ENCODE measurements at regions of chr4 and their contacts with region 1.

Region 1: DNA sequence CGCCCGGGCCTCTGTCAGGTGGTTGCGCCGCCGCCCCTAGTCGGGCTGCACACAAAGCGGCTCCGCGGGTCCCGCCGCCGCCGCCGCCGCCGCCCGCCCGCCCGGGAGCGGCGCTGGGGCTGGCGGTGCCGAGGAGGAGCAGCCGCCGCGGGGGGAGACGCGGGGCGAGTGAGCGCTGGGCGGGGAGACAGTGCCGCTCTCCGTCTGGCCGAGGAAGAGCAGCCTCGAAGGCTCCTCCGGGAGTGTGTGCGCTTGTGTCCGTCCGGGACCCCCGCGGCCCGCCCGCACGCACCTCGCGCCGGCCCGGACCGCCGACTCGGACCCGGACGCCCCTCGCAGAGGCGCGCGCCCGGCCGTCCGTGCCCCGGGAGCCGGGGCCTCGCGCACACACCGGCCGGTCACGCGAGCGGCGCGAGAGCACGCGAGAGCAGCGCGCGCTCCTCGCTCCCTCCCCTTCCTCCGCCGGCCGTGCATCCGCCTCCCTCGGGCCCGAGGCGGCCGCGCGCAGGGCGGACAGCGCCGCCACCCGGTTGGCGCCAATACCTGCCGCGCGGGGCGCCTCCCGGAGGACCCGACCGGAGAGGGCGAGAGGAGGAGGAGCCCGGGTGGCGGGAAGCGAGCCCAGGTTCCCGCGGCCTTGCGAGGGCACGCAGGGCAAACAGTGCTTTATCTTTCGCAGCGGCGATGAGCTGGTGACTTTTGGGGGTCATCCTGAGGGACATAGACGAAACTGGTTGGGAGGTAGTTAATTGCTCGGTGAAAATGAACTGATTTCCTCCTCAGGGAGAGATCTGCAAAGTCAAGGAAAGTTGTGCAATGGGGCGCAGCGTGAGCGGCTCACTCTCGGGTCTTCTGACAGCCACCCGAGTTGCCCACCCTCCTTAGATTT is at the start of gene PDS5A:
- DNase-seq: peak; percentile 93
- H3K4me3 Mint-ChIP-seq: peak within 1 kb of the TSS; percentile 94
- H3K27ac Mint-ChIP-seq: peak within 1 kb of the TSS; percentile 99
- H3K4me1 Mint-ChIP-seq: peaks cover 38% of the 10 kb centered on the region
- H3K27me3 Mint-ChIP-seq: no peaks in the 10 kb centered on the region
- total RNA-seq, gene PDS5A: 101 to 103 TPM

Region 2: GRCh38 chr4:39469429-39470077 is 508.2 kb before region 1 on chr4:
- CTCF ChIA-PET with region 1: interaction called, 5 read pairs
- POLR2A ChIA-PET with region 1: no interaction called
- intact Hi-C with region 1: loop called (anchors 1 kb)
- DNase-seq: peak; percentile 12
- H3K4me3 Mint-ChIP-seq: no peak overlapping the region
- H3K27ac Mint-ChIP-seq: no peak overlapping the region
- H3K4me1 Mint-ChIP-seq: peaks cover 9% of the 10 kb centered on the region
- H3K27me3 Mint-ChIP-seq: no peaks in the 10 kb centered on the region

Region 3: DNA sequence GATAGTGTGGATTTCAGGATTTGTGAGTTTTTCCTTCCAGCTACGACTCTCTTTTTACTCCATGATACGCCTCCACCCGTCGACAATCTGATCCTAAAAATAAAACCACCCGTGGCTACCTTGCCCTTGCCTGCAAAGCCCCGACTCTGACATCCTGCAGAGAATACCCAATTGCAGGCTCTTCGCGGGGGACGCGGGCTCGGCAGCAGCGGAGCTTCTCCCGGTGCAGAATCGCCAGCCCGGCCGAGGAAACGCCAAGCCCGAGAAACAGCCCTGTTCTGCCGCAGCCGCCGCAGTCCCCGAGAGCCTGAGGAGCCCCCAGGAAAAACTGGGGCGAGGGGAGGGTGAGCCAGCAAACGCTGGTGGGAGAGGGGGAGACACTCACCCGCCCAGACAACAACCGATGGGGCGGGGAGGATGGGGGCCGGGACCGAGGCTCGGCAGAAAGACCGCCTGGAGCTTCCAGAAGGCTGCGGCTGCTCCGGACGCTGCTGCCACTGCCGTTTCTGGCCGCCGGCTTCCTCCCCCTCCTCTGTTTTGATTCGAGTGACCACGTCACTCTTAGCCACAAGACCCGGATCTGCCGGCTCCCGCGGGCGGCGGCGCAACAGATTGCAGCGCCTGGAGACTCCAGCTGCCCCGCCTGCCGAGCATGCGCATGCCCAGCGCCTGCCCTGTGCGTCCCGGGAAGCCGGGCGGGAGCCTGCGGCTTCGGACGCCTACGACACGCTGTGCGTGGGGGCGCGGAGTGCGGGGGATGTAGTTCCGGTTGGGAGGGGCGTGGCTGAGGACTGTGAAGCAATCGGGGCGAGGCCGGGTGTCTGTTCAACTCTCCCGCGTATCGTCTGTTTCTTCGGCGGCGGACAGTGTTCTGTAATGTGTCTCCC is 339.1 kb before region 1 on chr4 and contains the start of gene SMIM14:
- CTCF ChIA-PET with region 1: no interaction called
- POLR2A ChIA-PET with region 1: no interaction called
- intact Hi-C with region 1: loop called (anchors 2 kb)
- DNase-seq: peak; percentile 96
- H3K4me3 Mint-ChIP-seq: peak within 1 kb of the TSS; percentile 93
- H3K27ac Mint-ChIP-seq: peak within 1 kb of the TSS; percentile 63
- H3K4me1 Mint-ChIP-seq: peaks cover 34% of the 10 kb centered on the region
- H3K27me3 Mint-ChIP-seq: no peaks in the 10 kb centered on the region
- total RNA-seq, gene SMIM14: 4.9 to 5.6 TPM

Region 4: GRCh38 chr4:39823191-39823590 is 154.5 kb before region 1 on chr4:
- CTCF ChIA-PET with region 1: no interaction called
- POLR2A ChIA-PET with region 1: no interaction called
- intact Hi-C with region 1: loop called (anchors 5 kb)
- DNase-seq: no peak
- H3K4me3 Mint-ChIP-seq: no peak overlapping the region
- H3K27ac Mint-ChIP-seq: peak overlapping the region; percentile 26
- H3K4me1 Mint-ChIP-seq: no peaks in the 10 kb centered on the region
- H3K27me3 Mint-ChIP-seq: no peaks in the 10 kb centered on the region

Region 5: DNA sequence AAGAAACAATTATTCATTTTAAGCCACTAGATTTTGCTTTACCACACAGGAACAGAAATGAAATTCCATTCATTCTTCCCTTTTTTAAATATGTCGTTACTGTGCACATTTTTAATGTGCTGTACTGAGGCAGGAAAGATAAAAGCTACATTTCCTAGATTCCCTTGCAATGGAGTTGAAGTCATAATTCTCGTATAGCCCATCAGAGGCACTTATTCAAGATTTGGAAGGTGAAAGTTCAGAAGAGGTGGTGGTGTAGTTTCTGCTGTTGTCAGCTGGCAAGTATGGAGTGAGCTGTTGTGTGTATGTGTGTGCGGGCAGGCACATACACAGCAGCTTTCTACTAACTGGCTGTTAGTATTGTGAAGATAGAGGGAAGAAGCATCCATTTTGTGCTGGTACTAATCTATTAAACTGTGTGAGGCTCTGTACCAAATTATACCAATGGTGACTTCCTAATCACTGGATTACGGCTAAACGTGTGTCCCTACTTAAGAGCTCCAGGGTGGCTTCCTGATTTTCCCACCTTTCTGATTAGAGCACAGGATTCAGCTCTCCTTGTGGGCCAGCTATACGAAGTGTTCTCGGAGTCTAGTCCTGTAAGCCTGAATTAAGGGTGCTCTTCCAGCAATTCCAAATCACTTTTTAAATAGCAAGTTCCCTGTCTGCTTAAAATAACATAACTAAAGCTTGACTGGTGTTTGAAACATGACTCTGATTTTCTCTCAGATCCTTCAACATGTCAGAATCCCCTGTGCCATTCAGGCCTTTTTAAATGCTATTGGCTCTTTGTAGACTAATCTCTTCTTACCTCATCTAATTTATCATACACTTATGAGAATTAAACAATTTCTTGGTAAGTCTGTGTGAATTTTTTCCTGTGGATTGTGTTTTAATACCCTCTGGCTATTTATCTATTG is 43.8 kb before region 1 on chr4:
- CTCF ChIA-PET with region 1: interaction called, 5 read pairs
- POLR2A ChIA-PET with region 1: no interaction called
- intact Hi-C with region 1: loop called (anchors 1 kb)
- DNase-seq: no peak
- H3K4me3 Mint-ChIP-seq: no peak overlapping the region
- H3K27ac Mint-ChIP-seq: peak overlapping the region; percentile 62
- H3K4me1 Mint-ChIP-seq: peaks cover 68% of the 10 kb centered on the region
- H3K27me3 Mint-ChIP-seq: no peaks in the 10 kb centered on the region

Region 6: GRCh38 chr4:40114206-40114605 is 136.5 kb after region 1 on chr4:
- CTCF ChIA-PET with region 1: no interaction called
- POLR2A ChIA-PET with region 1: no interaction called
- intact Hi-C with region 1: no loop called
- DNase-seq: no peak
- H3K4me3 Mint-ChIP-seq: no peak overlapping the region
- H3K27ac Mint-ChIP-seq: no peak overlapping the region
- H3K4me1 Mint-ChIP-seq: no peaks in the 10 kb centered on the region
- H3K27me3 Mint-ChIP-seq: no peaks in the 10 kb centered on the region

Measured in activated CD4-positive, alpha-beta memory T cell treated with anti-CD3 and anti-CD28 coated beads for 36 hours (primary cell).